ENCODE measurements at regions of chr19 and their contacts with region 1.

Region 1: DNA sequence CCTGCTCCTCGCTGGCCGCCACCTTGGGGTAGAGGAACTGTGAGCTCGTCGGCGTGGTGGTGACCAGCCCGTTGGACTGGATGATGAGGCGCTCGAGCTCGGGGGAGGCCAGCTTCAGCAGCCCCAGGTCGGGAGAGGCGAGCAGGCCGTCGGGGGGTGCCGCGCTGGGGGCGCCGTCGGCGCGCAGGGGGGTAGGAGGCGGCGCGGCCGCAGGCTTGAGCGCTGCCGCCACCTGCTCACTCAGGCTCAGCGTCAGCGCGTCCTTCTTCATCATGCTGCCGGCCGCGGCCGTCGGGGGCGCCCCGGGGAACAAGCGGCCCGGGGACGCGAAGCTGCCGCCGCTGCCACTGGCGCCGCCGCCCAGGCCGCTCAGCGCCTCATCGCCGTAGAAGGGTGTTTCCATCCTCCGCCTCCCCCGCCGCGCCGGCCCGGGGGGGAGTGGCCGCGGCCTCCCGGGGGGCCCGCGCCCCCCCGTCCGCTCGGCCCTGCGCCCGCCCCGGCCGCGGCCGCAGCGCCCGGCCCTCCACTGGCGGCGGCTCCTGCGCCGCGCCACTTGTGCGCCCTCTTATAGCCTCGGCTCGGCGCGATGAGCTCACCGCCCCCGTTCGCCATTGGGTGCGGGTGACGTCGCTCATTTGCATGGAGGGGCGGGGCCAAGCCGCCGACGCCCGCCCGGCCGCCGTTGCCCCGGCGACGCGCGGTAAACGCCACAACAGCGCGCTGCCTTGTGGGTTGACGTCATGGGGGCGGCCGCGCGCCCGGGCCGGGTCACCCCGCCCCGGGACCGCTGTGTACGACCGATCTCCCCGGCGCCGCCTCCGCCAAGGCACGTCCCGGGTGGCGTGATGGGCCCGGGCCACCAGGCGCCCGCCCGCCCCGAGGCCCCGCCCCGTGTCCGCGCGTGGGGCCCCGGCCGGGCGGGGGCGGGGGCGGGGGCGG is at the start of gene JUND:
- DNase-seq: peak; percentile 98
- H3K4me3 ChIP-seq: peak within 1 kb of the TSS; percentile 80
- H3K27ac ChIP-seq: peak within 1 kb of the TSS; percentile 89
- H3K4me1 ChIP-seq: peaks cover 28% of the 10 kb centered on the region
- CTCF ChIP-seq: peak; percentile 35; the same call in 1 of the 2 replicates
- total RNA-seq, gene JUND: 138 and 144 TPM in 2 replicates

Region 2: DNA sequence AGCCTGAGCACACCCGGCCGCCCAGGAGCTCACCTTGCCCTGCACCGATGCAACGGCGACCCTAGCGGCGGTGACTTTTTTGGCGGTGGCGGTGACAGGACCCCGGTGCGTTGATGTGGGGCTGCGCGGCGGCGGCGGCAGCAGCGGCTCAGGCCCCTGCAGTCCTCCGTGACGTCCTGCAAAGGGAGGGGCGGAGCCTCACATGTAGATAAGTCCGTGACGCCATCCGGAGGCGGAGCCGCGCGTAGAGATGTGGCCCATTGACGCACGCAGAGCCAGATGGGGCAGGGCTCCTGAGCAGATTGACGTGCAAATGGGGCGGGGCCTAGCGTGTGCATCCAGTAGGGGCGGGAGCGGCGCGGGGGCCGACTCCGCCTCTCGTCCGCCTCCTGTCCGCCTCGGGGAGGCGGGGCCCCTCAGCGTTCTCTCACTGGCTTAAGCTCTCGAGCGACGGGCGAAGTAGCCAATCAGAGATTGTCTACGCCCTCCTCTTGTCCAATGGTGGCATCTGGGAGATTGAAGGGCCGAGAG is 77.4 kb before region 1 on chr19 and contains the start of gene RAB3A:
- CTCF ChIA-PET with region 1: interaction called, 10 read pairs
- POLR2A ChIA-PET with region 1: interaction called, 4 read pairs
- intact Hi-C with region 1: loop called (anchors 2 kb)
- DNase-seq: peak; percentile 100
- H3K4me3 ChIP-seq: peak within 1 kb of the TSS; percentile 87
- H3K27ac ChIP-seq: peak within 1 kb of the TSS; percentile 84
- H3K4me1 ChIP-seq: peaks cover 29% of the 10 kb centered on the region
- CTCF ChIP-seq: no peak
- total RNA-seq, gene RAB3A: 2.9 and 4.9 TPM in 2 replicates

Region 3: DNA sequence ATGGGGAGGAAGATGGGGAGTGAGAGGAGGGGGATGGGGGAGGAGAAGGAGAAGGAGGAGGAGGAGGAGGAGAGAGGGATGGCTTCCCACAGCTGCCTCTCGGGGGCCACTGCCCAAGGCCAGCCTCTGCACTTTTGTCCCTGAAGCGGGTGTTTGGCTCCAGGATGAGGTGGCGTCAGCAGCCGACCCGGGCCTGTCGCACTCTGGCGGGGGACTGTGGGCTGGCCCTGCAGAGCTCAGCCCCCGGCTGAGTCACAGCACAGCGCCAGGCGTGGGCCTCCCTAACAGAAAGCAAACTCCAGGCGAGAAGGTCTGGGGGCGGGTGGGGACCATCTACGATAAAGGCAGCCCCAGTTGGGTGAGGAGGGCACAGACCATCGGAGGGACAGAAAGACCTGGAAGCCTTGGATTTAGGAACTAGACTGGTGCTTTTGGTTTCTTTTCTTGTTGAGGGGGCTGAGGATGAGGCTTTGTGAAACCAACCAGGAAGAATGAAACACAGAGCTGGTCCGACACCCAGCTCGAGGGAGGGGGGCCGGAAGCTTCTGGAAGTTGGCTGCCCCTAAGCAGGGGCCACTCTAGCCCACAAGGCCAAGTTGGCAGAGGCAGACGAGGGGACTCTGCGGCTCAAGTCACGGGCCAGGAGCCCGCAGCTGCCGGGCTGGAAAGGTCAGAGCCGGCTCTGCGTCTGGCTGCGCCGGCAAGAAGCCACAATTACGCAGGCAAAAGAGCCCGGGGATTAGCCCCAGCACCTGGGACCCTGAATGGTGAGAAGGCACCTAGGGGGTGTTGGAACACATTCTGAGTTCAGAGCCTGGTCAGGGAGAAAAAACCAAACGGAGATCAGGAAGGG is 23.3 kb after region 1 on chr19:
- CTCF ChIA-PET with region 1: interaction called, 4 read pairs
- POLR2A ChIA-PET with region 1: interaction called, 40 read pairs
- intact Hi-C with region 1: loop called (anchors 1 kb)
- DNase-seq: peak; percentile 83
- H3K4me3 ChIP-seq: peak overlapping the region; percentile 65
- H3K27ac ChIP-seq: peak overlapping the region; percentile 94
- H3K4me1 ChIP-seq: peaks cover 54% of the 10 kb centered on the region
- CTCF ChIP-seq: peak; percentile 26; the same call in 1 of the 2 replicates

Region 4: DNA sequence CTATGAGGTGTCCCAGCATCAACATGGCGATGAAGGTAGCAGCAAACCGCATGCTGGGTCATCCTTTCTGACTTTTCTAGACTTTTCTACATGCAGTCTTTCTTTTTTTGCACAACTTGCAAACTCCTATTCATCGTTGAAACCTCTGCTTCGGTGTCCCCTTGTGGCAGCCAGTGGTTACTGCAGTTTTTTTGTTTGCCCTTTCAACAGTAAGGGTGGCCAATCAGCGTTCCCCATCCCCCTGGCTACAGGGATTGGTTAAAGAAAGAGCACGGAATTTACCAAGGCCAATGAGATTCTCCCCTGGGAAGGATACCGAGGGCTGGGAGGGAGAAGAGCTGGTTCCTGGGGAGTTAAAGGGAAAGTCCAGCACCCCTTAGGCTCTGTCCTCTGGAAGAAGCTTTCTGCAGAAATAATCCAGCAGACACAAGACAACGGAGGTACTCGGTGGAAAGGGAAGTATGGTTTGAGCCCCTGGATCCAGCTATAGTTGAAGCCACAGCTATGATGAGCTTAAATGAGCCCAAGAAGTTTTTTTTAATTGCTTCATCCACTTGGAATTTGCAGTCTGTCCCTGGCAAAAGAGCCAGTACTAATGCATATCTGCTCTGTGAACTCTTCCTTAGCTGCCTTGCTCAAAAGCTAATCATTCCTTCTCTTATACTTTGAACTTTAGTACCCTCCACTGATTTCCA is 47.1 kb after region 1 on chr19:
- CTCF ChIA-PET with region 1: interaction called, 22 read pairs
- POLR2A ChIA-PET with region 1: interaction called, 19 read pairs
- intact Hi-C with region 1: loop called (anchors 1 kb)
- DNase-seq: peak; percentile 94
- H3K4me3 ChIP-seq: peak overlapping the region; percentile 56
- H3K27ac ChIP-seq: no peak overlapping the region
- H3K4me1 ChIP-seq: peaks cover 32% of the 10 kb centered on the region
- CTCF ChIP-seq: peak; percentile 90

Region 5: DNA sequence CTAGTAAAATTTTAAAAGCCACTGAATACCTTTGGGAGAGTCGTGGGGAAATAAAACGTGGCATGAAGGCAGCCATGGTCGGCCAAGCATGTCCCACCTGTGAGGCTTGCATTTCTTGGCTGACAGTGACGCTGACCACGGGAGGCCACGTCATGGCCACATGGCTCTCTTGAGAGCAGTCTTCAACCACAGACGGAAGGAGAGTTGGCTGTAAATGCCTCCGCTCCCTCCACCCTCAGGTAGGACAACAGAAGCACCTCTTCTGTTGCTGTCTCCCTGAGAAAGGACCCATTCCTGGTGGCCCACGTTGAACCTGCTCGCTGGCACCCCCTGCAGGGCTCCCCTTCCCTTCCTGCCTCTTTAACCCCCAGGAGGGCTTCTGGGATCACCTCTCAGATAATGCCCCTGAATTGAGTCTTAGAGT is 126.7 kb after region 1 on chr19:
- CTCF ChIA-PET with region 1: no interaction called
- POLR2A ChIA-PET with region 1: no interaction called
- intact Hi-C with region 1: loop called (anchors 2 kb)
- DNase-seq: peak; percentile 76
- H3K4me3 ChIP-seq: no peak overlapping the region
- H3K27ac ChIP-seq: no peak overlapping the region
- H3K4me1 ChIP-seq: peaks cover 26% of the 10 kb centered on the region
- CTCF ChIP-seq: peak; percentile 84

Measured in OCI-LY7 (cell line).